ENCODE measurements at regions of chr1 and their contacts with region 1.

Region 1: GRCh38 chr1:93078986-93079654 is at the start of gene MTF2:
- DNase-seq: peak; percentile 97
- H3K4me3 Mint-ChIP-seq: peak within 1 kb of the TSS; percentile 85
- H3K27ac Mint-ChIP-seq: peak within 1 kb of the TSS; percentile 88
- H3K4me1 Mint-ChIP-seq: peaks cover 28% of the 10 kb centered on the region
- H3K27me3 Mint-ChIP-seq: no peaks in the 10 kb centered on the region
- total RNA-seq, gene MTF2: 53.6 to 55.1 TPM

Region 2: GRCh38 chr1:92960395-92961130 is 118.6 kb before region 1 on chr1:
- CTCF ChIA-PET with region 1: interaction called, 4 read pairs
- POLR2A ChIA-PET with region 1: interaction called, 5 read pairs
- intact Hi-C with region 1: loop called (anchors 2 kb)
- DNase-seq: peak; percentile 75
- H3K4me3 Mint-ChIP-seq: peak overlapping the region; percentile 88
- H3K27ac Mint-ChIP-seq: peak overlapping the region; percentile 96
- H3K4me1 Mint-ChIP-seq: peaks cover 39% of the 10 kb centered on the region
- H3K27me3 Mint-ChIP-seq: no peaks in the 10 kb centered on the region

Region 3: GRCh38 chr1:93061895-93062792 is 17.0 kb before region 1 on chr1:
- CTCF ChIA-PET with region 1: interaction called, 11 read pairs
- POLR2A ChIA-PET with region 1: interaction called, 6 read pairs
- intact Hi-C with region 1: no loop called
- DNase-seq: peak; percentile 61
- H3K4me3 Mint-ChIP-seq: no peak overlapping the region
- H3K27ac Mint-ChIP-seq: no peak overlapping the region
- H3K4me1 Mint-ChIP-seq: peaks cover 4% of the 10 kb centered on the region
- H3K27me3 Mint-ChIP-seq: peaks cover 9% of the 10 kb centered on the region

Region 4: GRCh38 chr1:93179886-93180722 is 101.0 kb after region 1 on chr1 and contains the start of gene TMED5:
- CTCF ChIA-PET with region 1: interaction called, 5 read pairs
- POLR2A ChIA-PET with region 1: interaction called, 3 read pairs
- intact Hi-C with region 1: loop called (anchors 1 kb)
- DNase-seq: peak; percentile 98
- H3K4me3 Mint-ChIP-seq: peak within 1 kb of the TSS; percentile 88
- H3K27ac Mint-ChIP-seq: peak within 1 kb of the TSS; percentile 97
- H3K4me1 Mint-ChIP-seq: peaks cover 57% of the 10 kb centered on the region
- H3K27me3 Mint-ChIP-seq: no peaks in the 10 kb centered on the region
- total RNA-seq, gene TMED5: 47.0 to 49.2 TPM

Region 5: GRCh38 chr1:93313026-93313425 is 233.9 kb after region 1 on chr1:
- CTCF ChIA-PET with region 1: no interaction called
- POLR2A ChIA-PET with region 1: no interaction called
- intact Hi-C with region 1: no loop called
- DNase-seq: no peak
- H3K4me3 Mint-ChIP-seq: no peak overlapping the region
- H3K27ac Mint-ChIP-seq: no peak overlapping the region
- H3K4me1 Mint-ChIP-seq: no peaks in the 10 kb centered on the region
- H3K27me3 Mint-ChIP-seq: no peaks in the 10 kb centered on the region

Region 6: GRCh38 chr1:93345633-93346420 is 266.7 kb after region 1 on chr1 and contains the start of gene DR1:
- CTCF ChIA-PET with region 1: interaction called, 6 read pairs
- POLR2A ChIA-PET with region 1: interaction called, 15 read pairs
- intact Hi-C with region 1: loop called (anchors 2 kb)
- DNase-seq: peak; percentile 95
- H3K4me3 Mint-ChIP-seq: peak within 1 kb of the TSS; percentile 94
- H3K27ac Mint-ChIP-seq: peak within 1 kb of the TSS; percentile 98
- H3K4me1 Mint-ChIP-seq: peaks cover 22% of the 10 kb centered on the region
- H3K27me3 Mint-ChIP-seq: no peaks in the 10 kb centered on the region
- total RNA-seq, gene DR1: 74.9 to 77.4 TPM

Measured in activated CD4-positive, alpha-beta memory T cell treated with anti-CD3 and anti-CD28 coated beads for 36 hours (primary cell).